CD8-positive, alpha-beta T cell (primary cell): ENCODE measurements at regions of chr19 and their contacts with region 1.

Region 1: DNA sequence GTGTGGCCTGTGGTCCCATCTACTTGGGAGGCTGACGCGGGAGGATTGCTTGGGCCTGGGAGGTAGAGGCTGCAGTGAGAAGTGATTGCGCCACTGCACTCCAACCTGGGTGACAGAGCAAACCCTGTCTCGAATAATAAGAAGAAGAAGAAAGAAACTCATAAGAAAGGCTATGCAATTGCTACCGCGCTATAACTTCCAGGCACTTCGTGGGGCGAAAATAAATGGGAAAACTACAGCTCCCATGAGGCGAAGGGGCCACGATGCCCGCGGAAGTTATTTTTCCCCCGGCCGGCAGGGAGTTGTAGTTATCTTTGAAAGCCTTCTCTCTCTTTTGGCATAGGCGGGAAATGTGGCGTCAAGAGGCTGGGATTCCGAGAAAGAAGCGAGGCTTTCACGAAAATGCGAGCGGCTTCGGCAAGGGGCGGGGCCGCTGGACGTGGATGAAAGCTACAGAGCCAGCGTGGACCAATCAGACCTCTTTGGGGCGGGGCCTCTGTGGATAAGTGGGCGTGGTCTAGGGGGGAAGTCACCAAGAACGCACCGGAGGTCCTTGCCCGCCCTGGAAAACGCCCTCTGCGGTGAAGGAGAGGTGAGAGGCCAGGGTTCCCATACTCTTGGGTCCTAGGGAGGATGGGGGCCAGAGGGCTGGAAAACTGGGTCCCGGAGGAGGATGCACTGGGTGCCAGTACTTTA is at the start of gene NUCB1:
- DNase-seq: peak; percentile 96 to 99 (median 98)
- ATAC-seq: peak; percentile 95
- H3K4me3 ChIP-seq: peak within 1 kb of the TSS; percentile 85 to 98
- H3K4me3 Mint-ChIP-seq: peak within 1 kb of the TSS; percentile 94
- H3K27ac ChIP-seq: peak within 1 kb of the TSS; percentile 77 to 78
- H3K27ac Mint-ChIP-seq: peak within 1 kb of the TSS; percentile 95
- H3K4me1 ChIP-seq: peaks cover 29% of the 10 kb centered on the region
- H3K4me1 Mint-ChIP-seq: peaks cover 30% of the 10 kb centered on the region
- H3K27me3 ChIP-seq: no peaks in the 10 kb centered on the region
- H3K27me3 Mint-ChIP-seq: peaks cover 2% of the 10 kb centered on the region
- CTCF ChIP-seq: no peak
- total RNA-seq, gene NUCB1: 55.4 to 66.7 TPM

Region 2: GRCh38 chr19:48746738-48747575 is 153.0 kb before region 1 on chr19 and contains the start of gene IZUMO1:
- CTCF ChIA-PET with region 1: no interaction called
- POLR2A ChIA-PET with region 1: no interaction called
- intact Hi-C with region 1: loop called in 1 of 2 experiments (anchors 5 kb)
- DNase-seq: peak in 5 of 9 experiments; percentile 37 to 72 (median 47)
- ATAC-seq: peak; percentile 75
- H3K4me3 ChIP-seq: no peak within 1 kb of the TSS
- H3K4me3 Mint-ChIP-seq: no peak within 1 kb of the TSS
- H3K27ac ChIP-seq: no peak within 1 kb of the TSS
- H3K27ac Mint-ChIP-seq: no peak within 1 kb of the TSS
- H3K4me1 ChIP-seq: peaks cover 7% of the 10 kb centered on the region
- H3K4me1 Mint-ChIP-seq: peaks cover 14% of the 10 kb centered on the region
- H3K27me3 ChIP-seq: peaks cover 0 to 5% of the 10 kb centered on the region in 2 experiments
- H3K27me3 Mint-ChIP-seq: peaks cover 18% of the 10 kb centered on the region
- CTCF ChIP-seq: no peak
- total RNA-seq, gene IZUMO1: not detected

Region 3: GRCh38 chr19:48858984-48859710 is 40.8 kb before region 1 on chr19:
- CTCF ChIA-PET with region 1: no interaction called
- POLR2A ChIA-PET with region 1: no interaction called
- intact Hi-C with region 1: loop called (anchors 1 to 5 kb)
- DNase-seq: peak in 8 of 9 experiments; percentile 74 to 84 (median 82)
- ATAC-seq: peak; percentile 76
- H3K4me3 ChIP-seq: peak overlapping the region; percentile 49 to 55
- H3K4me3 Mint-ChIP-seq: peak overlapping the region; percentile 88
- H3K27ac ChIP-seq: no peak overlapping the region
- H3K27ac Mint-ChIP-seq: peak overlapping the region; percentile 87
- H3K4me1 ChIP-seq: no peaks in the 10 kb centered on the region
- H3K4me1 Mint-ChIP-seq: peaks cover 3% of the 10 kb centered on the region
- H3K27me3 ChIP-seq: no peaks in the 10 kb centered on the region
- H3K27me3 Mint-ChIP-seq: no peaks in the 10 kb centered on the region
- CTCF ChIP-seq: no peak

Region 4: GRCh38 chr19:48872182-48872883 is 27.6 kb before region 1 on chr19 and contains the start of gene PPP1R15A:
- CTCF ChIA-PET with region 1: no interaction called
- POLR2A ChIA-PET with region 1: interaction called, 3 read pairs
- intact Hi-C with region 1: loop called (anchors 1 kb)
- DNase-seq: peak; percentile 95 to 99 (median 98)
- ATAC-seq: peak; percentile 41
- H3K4me3 ChIP-seq: peak within 1 kb of the TSS; percentile 88 to 90
- H3K4me3 Mint-ChIP-seq: peak within 1 kb of the TSS; percentile 97
- H3K27ac ChIP-seq: peak within 1 kb of the TSS; percentile 98 to 99
- H3K27ac Mint-ChIP-seq: peak within 1 kb of the TSS; percentile 100
- H3K4me1 ChIP-seq: peaks cover 32% of the 10 kb centered on the region
- H3K4me1 Mint-ChIP-seq: peaks cover 34% of the 10 kb centered on the region
- H3K27me3 ChIP-seq: no peaks in the 10 kb centered on the region
- H3K27me3 Mint-ChIP-seq: no peaks in the 10 kb centered on the region
- CTCF ChIP-seq: no peak
- total RNA-seq, gene PPP1R15A: 398 to 399 TPM

Region 5: GRCh38 chr19:48933382-48933932 is 33.5 kb after region 1 on chr19 and contains the start of gene DHDH:
- CTCF ChIA-PET with region 1: no interaction called
- POLR2A ChIA-PET with region 1: no interaction called
- intact Hi-C with region 1: loop called (anchors 1 to 2 kb)
- DNase-seq: peak; percentile 75 to 92 (median 89)
- ATAC-seq: peak; percentile 98
- H3K4me3 ChIP-seq: peak within 1 kb of the TSS; percentile 36 to 48
- H3K4me3 Mint-ChIP-seq: peak within 1 kb of the TSS; percentile 85
- H3K27ac ChIP-seq: peak within 1 kb of the TSS in 1 of 2 experiments; percentile 26
- H3K27ac Mint-ChIP-seq: peak within 1 kb of the TSS; percentile 86
- H3K4me1 ChIP-seq: peaks cover 5% of the 10 kb centered on the region
- H3K4me1 Mint-ChIP-seq: peaks cover 16% of the 10 kb centered on the region
- H3K27me3 ChIP-seq: no peaks in the 10 kb centered on the region
- H3K27me3 Mint-ChIP-seq: no peaks in the 10 kb centered on the region
- CTCF ChIP-seq: no peak
- total RNA-seq, gene DHDH: 0.68 to 1.0 TPM

Region 6: GRCh38 chr19:48970923-48971395 is 71.0 kb after region 1 on chr19:
- CTCF ChIA-PET with region 1: interaction called, 6 read pairs
- POLR2A ChIA-PET with region 1: interaction called, 5 read pairs
- intact Hi-C with region 1: loop called in 1 of 2 experiments (anchors 2 kb)
- DNase-seq: peak; percentile 67 to 91 (median 86)
- ATAC-seq: peak; percentile 91
- H3K4me3 ChIP-seq: no peak overlapping the region
- H3K4me3 Mint-ChIP-seq: no peak overlapping the region
- H3K27ac ChIP-seq: no peak overlapping the region
- H3K27ac Mint-ChIP-seq: no peak overlapping the region
- H3K4me1 ChIP-seq: peaks cover 10% of the 10 kb centered on the region
- H3K4me1 Mint-ChIP-seq: peaks cover 19% of the 10 kb centered on the region
- H3K27me3 ChIP-seq: no peaks in the 10 kb centered on the region
- H3K27me3 Mint-ChIP-seq: no peaks in the 10 kb centered on the region
- CTCF ChIP-seq: peak; percentile 84

Region 7: GRCh38 chr19:48982280-48982679 is 82.4 kb after region 1 on chr19:
- CTCF ChIA-PET with region 1: no interaction called
- POLR2A ChIA-PET with region 1: no interaction called
- intact Hi-C with region 1: no loop called
- DNase-seq: no peak
- ATAC-seq: no peak
- H3K4me3 ChIP-seq: no peak overlapping the region
- H3K4me3 Mint-ChIP-seq: no peak overlapping the region
- H3K27ac ChIP-seq: no peak overlapping the region
- H3K27ac Mint-ChIP-seq: no peak overlapping the region
- H3K4me1 ChIP-seq: no peaks in the 10 kb centered on the region
- H3K4me1 Mint-ChIP-seq: no peaks in the 10 kb centered on the region
- H3K27me3 ChIP-seq: no peaks in the 10 kb centered on the region
- H3K27me3 Mint-ChIP-seq: no peaks in the 10 kb centered on the region
- CTCF ChIP-seq: no peak